ENCODE measurements at regions of chr6 and their contacts with region 1.

Region 1: DNA sequence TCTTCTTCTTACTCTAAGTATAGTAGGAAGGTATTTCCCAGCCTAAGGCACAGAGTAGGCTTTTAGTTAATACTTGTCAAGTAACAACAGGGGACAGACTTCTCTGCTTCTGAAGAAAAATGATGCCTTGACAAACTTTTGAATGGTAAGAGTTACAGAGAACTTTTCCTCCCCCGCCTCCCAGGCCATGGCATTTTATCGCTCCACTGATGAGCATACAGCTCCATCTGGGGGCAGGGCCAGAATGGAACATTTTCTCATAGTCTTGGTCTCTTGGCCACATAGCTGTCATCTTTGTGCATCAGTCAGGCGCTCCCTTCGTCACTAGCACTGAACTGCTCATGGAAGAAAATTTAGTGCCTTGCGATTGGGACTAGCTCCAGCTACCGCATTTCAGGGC is 1066.8 kb upstream of the CITED2 start:
- DNase-seq: peak; percentile 57
- H3K4me3 ChIP-seq: no peak overlapping the region
- H3K27ac ChIP-seq: no peak overlapping the region
- H3K4me1 ChIP-seq: peaks cover 18% of the 10 kb centered on the region
- H3K27me3 ChIP-seq: no peaks in the 10 kb centered on the region
- CTCF ChIP-seq: peak; percentile 27 to 40
- POLR2A ChIP-seq: no peak

Region 2: GRCh38 chr6:139881728-139882211 is 559.5 kb before region 1 on chr6:
- CTCF ChIA-PET with region 1: no interaction called
- POLR2A ChIA-PET with region 1: no interaction called
- dilution Hi-C with region 1: no loop called
- intact Hi-C with region 1: loop called (anchors 1 kb)
- DNase-seq: peak; percentile 69
- H3K4me3 ChIP-seq: no peak overlapping the region
- H3K27ac ChIP-seq: no peak overlapping the region
- H3K4me1 ChIP-seq: peaks cover 14% of the 10 kb centered on the region
- H3K27me3 ChIP-seq: no peaks in the 10 kb centered on the region
- CTCF ChIP-seq: peak; percentile 42 to 49
- POLR2A ChIP-seq: no peak

Region 3: DNA sequence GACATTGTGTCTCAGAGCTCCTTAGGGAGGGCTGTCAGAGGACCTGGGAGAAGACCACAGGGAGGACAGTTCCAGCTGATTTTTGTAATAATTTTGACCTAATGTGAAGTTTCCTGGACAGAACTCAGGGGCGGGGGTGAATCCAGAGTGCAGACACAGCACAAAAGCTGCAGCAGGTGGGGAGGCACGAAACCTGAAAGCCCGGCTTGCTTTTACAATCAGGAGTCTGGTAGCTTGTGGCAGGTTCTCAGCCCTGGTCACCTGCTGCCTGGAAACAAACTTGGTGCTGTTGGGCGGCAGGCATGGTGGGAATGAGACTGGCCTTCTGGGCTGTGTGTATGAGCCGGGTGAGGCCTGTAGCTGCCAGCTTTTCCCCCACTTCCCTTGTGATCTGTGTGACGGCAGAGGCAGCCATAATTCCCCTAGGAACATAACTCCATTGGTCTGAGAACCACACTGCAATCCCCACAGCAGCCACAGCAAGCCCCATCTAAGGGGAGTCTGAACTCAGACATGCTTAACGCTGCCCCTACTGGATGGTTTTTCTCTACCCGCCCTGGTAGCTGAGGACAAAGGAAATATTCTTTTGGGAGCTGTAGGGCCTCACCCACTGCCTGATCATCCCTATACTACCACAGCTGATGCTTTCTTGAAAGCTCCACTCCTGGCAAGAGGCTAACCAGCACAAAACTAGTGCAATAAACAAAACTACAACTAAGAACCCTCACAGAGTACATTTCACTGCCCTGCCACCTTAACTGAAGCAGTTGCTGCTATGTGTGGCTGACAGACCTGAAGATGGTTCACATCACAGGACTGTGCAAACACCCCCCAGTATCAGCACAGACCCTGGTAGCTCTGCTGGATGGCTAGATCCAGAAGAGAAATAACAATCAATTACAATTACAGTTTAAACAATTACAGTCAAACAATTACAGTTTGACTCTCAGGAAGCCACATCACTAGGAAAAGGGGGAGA is 636.4 kb after region 1 on chr6:
- CTCF ChIA-PET with region 1: no interaction called
- POLR2A ChIA-PET with region 1: no interaction called
- dilution Hi-C with region 1: no loop called
- intact Hi-C with region 1: no loop called
- DNase-seq: no peak
- H3K4me3 ChIP-seq: no peak overlapping the region
- H3K27ac ChIP-seq: no peak overlapping the region
- H3K4me1 ChIP-seq: no peaks in the 10 kb centered on the region
- H3K27me3 ChIP-seq: no peaks in the 10 kb centered on the region
- CTCF ChIP-seq: peak; percentile 11 to 19
- POLR2A ChIP-seq: no peak

Measured in endothelial cell of umbilical vein (primary cell).